Activated naive CD8-positive, alpha-beta T cell treated with anti-CD3 and anti-CD28 coated beads, Interleukin-2, amount 10 ng/mL, durations not matched to agents 7 days and 5 days (primary cell): ENCODE measurements at regions of chr7 and their contacts with region 1.

Region 1: DNA sequence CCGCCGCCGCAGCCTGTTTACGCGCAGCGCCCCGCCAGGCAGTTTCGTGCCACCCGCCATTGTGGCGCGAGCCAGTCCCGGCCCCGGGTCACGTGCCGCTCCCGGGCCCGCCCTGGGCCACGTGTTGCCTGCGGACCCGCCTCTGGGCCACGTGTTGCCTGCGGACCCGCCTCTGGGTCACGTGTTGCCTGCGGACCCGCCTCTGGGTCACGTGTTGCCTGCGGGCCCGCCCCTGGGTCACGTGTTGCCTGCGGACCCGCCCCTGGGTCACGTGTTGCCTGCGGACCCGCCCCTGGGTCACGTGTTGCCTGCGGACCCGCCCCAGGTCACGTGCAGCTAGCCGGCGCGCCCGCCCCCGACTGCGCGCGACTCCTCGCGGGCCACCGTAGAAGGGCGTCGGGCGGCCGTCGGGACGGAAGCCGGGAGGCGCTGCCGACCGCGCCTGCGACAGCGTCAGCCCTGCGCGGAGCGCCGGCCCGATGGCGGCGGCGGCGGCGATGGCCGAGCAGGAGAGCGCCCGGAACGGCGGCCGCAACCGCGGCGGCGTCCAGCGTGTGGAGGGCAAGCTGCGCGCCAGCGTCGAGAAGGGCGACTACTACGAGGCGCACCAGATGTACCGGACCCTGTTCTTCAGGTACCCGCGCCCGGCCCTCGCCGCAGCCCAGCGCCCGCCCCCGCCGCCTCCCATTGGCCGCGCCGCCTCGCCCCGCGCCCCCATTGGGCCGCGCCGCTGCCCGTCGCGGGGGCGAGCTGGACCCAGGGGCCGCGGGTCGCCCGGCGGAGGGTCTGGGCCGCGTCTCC is at the start of gene GET4:
- DNase-seq: peak; percentile 100
- ATAC-seq: peak; percentile 83
- H3K4me3 Mint-ChIP-seq: peak within 1 kb of the TSS; percentile 100
- H3K27ac Mint-ChIP-seq: peak within 1 kb of the TSS; percentile 98
- H3K4me1 Mint-ChIP-seq: peaks cover 19% of the 10 kb centered on the region
- H3K27me3 Mint-ChIP-seq: no peaks in the 10 kb centered on the region
- total RNA-seq, gene GET4: 44.1 to 44.7 TPM

Region 2: GRCh38 chr7:816300-816750 is 60.0 kb before region 1 on chr7:
- POLR2A ChIA-PET with region 1: interaction called, 11 read pairs
- DNase-seq: peak; percentile 97
- ATAC-seq: peak; percentile 99
- H3K4me3 Mint-ChIP-seq: peak overlapping the region; percentile 80
- H3K27ac Mint-ChIP-seq: no peak overlapping the region
- H3K4me1 Mint-ChIP-seq: peaks cover 36% of the 10 kb centered on the region
- H3K27me3 Mint-ChIP-seq: peaks cover 27% of the 10 kb centered on the region

Region 3: GRCh38 chr7:859359-860030 is 16.9 kb before region 1 on chr7:
- POLR2A ChIA-PET with region 1: no interaction called
- DNase-seq: no peak
- ATAC-seq: no peak
- H3K4me3 Mint-ChIP-seq: no peak overlapping the region
- H3K27ac Mint-ChIP-seq: no peak overlapping the region
- H3K4me1 Mint-ChIP-seq: no peaks in the 10 kb centered on the region
- H3K27me3 Mint-ChIP-seq: no peaks in the 10 kb centered on the region

Region 4: DNA sequence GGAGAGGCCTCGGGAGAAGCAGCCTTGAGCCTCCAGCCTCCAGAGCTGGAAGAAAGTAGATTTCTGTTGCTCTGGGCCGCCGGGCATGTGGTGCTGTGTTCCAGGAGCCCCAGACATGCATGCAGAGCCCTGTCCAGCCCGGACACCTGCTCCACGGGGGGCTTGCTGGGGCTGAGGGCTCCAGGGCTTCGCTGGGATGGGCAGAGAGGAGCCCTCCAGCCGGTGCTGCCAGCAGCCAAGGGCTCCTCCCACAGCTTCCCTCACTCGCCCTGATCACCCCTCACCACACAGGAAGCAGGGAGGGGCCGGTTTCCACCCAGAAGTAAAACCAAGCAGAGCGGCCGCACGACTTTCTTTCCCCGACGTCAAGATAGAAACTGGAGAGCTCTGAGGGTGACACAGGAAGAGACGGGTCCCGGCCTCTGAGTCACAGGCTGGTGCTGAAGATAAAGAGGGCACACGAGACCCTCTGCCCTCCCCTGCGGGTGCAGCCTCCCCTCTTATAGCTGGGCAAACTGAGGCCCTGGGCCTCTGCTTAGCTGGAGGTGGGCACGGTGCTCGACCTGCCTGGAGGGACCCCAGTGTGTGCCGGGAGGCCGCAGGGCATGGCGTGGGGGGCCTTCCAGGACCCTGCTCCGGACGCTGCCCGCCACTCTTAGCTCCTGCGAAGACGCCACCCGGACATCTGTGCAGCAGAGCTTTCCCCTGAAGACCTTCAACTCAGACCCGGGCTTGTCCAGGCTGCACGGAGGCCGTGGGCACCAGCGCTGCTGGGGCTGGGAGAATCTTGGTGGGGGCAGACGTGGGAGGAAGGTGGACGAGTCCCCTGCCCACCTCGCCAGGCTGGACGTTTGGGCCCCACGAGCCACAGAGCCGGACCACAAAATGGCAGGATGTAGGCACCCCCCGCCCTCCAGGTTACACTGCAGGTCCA is 47.0 kb after region 1 on chr7:
- POLR2A ChIA-PET with region 1: interaction called, 16 read pairs
- DNase-seq: peak; percentile 86
- ATAC-seq: peak; percentile 76
- H3K4me3 Mint-ChIP-seq: peak overlapping the region; percentile 90
- H3K27ac Mint-ChIP-seq: peak overlapping the region; percentile 96
- H3K4me1 Mint-ChIP-seq: peaks cover 8% of the 10 kb centered on the region
- H3K27me3 Mint-ChIP-seq: no peaks in the 10 kb centered on the region

Region 5: DNA sequence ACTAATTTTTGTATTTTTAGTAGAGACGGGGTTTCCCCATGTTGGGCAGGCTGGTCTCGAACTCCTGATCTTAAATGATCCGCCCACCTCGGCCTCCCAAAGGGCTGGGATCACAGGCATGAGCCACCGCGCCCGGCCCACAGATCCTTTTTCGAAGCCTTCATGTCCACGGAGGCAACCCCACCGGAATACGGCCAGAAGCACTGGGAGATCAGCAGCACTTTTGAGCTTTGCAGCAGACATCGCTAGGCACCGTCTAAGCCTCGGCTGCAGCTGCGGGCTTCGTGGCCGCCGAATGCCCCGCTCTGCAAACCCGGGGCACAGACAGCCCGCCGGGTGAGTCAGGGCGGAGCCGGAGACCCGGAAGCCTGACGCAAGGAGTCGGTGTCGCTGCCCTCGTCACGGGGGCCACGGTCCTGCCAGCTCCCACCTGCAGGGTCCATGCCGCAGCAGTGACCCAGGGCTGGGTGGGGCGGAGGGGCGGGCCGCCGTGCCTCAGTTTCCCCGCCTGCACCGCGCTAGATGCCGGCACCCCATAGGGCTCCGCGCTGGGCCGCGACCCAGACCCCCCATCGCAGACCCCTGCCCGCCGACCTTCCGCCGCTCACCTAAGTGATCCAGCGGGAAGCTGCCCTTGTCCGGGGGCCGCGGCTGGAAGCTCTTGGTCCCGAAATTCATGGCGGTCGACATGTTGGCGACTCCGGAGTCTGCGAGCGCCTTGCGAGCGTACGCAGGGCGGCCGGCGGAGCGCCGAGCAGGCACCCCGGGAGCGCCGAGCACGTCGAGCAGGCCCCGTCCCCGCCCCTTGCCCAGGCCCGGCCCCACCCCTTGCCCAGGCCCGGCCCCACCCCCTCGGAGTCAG is 98.7 kb after region 1 on chr7 and contains the start of gene COX19:
- POLR2A ChIA-PET with region 1: interaction called, 17 read pairs
- DNase-seq: peak; percentile 93
- ATAC-seq: peak; percentile 94
- H3K4me3 Mint-ChIP-seq: peak within 1 kb of the TSS; percentile 93
- H3K27ac Mint-ChIP-seq: peak within 1 kb of the TSS; percentile 89
- H3K4me1 Mint-ChIP-seq: peaks cover 16% of the 10 kb centered on the region
- H3K27me3 Mint-ChIP-seq: no peaks in the 10 kb centered on the region
- total RNA-seq, gene COX19: 26.2 to 29.3 TPM